Esophagus squamous epithelium (tissue), 5 donors: ENCODE measurements at regions of chr11 and their contacts with region 1.

Region 1: DNA sequence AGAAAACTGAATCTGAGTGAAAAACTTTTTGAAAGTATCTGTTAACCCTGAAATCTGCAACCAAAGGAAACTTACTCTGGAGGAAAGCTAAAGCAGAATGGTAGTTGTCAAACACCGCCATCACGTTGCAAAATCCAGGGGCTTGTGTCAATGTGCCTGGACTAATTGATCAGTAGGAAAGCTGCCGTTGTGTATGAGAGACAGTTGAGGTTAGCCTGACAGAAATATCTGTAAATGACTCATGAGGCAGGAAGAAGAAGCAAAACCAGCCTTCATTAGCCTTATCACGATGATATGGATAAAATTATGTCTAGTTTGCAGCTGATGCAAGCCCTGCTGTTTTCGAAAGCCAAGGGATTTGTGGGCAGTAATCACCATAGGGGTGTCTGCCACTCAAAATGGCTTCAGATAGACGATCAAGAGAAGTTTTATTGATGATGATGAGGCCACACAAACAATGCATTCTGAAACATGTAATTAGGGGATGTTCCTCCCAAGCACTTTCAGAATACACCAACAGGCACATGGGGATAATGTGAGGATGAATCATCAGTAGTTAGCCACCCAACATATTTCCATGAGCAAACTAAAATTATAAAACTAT is 8.9 kb downstream of the SCGB1A1 start:
- DNase-seq: no peak
- H3K4me3 ChIP-seq: no peak overlapping the region
- H3K27ac ChIP-seq: peak overlapping the region; percentile 2 to 72 (median 40)
- H3K4me1 ChIP-seq: peaks cover 10 to 59% (median 36%) of the 10 kb centered on the region in 3 donors
- H3K27me3 ChIP-seq: no peaks in the 10 kb centered on the region
- CTCF ChIP-seq: no peak
- POLR2A ChIP-seq: no peak

Region 2: DNA sequence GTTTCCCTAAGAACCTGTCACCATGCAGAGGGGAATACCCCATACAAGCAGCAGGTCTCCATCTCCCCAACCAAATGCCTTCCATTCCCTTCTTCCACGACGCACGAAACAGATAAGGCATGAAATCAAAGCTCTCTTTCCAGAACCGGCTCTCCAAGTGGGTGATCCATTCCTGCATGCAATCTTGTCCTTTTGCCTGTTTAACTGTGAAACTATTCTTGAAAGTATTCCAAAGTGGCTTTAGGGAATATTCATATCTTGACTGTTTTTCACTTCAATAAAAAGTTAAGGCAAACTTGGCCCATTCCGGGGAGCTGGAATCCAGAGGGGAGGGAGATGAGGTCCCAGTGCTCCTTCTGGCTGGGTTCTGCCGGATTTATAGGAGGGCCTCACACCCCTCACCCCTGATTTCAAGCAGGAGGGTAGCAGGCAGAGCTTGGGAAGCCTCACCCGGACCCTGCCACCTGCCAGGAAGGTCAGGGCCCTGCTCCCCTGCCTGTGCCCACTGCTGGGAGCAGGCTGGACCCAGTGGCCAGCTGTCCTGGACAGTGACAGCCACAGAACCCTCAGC is 52.0 kb after region 1 on chr11:
- intact Hi-C with region 1: no loop called
- DNase-seq: no peak
- H3K4me3 ChIP-seq: no peak overlapping the region
- H3K27ac ChIP-seq: peak overlapping the region; percentile 55 to 83 (median 77)
- H3K4me1 ChIP-seq: peaks cover 8 to 18% (median 11%) of the 10 kb centered on the region in 3 donors
- H3K27me3 ChIP-seq: no peaks in the 10 kb centered on the region
- CTCF ChIP-seq: no peak
- POLR2A ChIP-seq: no peak

Region 3: DNA sequence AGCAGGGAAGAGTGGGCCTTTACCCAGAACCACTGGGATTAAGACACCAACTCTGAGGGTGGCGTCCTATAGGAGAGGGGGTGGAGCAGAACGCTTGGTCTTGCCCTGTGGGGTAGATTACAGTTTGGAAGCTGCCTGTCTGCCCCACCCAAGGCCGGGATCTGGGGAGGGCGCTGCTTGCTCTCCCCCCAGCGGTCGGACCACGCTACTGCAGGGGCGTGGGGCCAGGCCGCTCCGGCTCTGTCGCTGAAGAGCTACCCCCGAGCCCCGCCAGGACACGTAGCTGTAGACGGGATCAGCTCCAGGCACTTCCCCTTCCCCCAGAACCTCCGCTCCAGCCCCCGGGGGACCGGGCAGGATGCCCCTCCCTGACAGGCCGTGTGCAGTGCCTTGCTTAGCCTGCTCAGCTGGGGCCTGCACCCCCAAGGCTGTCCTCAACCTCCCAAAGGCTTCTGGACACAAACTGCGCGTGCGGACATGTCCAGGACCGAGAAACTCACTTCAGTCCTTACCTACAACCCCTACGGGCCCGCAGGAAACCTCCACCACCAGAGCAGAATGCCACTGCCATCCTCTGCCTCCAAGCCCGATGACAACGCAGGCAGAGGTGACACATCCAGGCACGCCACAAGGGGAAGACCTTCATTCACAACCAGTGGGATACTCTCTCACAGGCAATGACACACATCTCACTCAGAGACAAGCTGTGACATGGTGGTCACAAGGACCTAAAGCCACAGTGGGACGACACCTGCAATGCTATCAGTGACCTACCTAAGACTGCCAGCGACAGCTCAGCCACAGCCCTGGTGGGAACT is 115.2 kb after region 1 on chr11:
- intact Hi-C with region 1: loop called (anchors 2 kb)
- DNase-seq: no peak
- H3K4me3 ChIP-seq: peak overlapping the region; percentile 88 to 100 (median 98)
- H3K27ac ChIP-seq: peak overlapping the region; percentile 99 to 100 (median 100)
- H3K4me1 ChIP-seq: peaks cover 46 to 82% (median 62%) of the 10 kb centered on the region in 3 donors
- H3K27me3 ChIP-seq: no peaks in the 10 kb centered on the region
- CTCF ChIP-seq: peak; percentile 99 to 100 (median 100)
- POLR2A ChIP-seq: peak in 2 of 4 donors; percentile 28 to 40